Astrocyte of the cerebellum (primary cell): ENCODE measurements at regions of chr1 and their contacts with region 1.

Region 1: GRCh38 chr1:182071924-182072323 is 10.4 kb upstream of the ZNF648 start:
- DNase-seq: no peak
- H3K4me3 ChIP-seq: no peak overlapping the region
- CTCF ChIP-seq: no peak

Region 2: DNA sequence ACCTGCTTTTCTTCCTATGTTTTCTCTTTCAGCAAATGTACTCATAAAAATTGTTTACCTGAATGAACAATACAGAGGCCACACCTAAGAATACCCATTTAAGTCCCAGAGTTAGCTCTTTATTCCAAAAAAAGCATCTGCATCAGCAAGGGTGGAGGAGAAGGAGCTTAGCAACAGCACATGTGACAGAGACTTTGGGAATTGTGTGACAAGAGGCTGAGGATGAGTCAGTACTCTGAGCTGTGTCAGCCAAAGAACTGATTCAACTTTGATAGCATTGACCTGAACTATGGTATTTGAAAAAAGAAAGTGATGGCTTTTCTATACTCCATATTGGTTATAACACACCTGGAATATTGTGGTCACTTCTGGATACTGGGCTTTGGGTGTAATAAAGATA is 173.2 kb before region 1 on chr1:
- in situ Hi-C with region 1: no loop called
- DNase-seq: no peak
- H3K4me3 ChIP-seq: no peak overlapping the region
- CTCF ChIP-seq: no peak

Region 3: DNA sequence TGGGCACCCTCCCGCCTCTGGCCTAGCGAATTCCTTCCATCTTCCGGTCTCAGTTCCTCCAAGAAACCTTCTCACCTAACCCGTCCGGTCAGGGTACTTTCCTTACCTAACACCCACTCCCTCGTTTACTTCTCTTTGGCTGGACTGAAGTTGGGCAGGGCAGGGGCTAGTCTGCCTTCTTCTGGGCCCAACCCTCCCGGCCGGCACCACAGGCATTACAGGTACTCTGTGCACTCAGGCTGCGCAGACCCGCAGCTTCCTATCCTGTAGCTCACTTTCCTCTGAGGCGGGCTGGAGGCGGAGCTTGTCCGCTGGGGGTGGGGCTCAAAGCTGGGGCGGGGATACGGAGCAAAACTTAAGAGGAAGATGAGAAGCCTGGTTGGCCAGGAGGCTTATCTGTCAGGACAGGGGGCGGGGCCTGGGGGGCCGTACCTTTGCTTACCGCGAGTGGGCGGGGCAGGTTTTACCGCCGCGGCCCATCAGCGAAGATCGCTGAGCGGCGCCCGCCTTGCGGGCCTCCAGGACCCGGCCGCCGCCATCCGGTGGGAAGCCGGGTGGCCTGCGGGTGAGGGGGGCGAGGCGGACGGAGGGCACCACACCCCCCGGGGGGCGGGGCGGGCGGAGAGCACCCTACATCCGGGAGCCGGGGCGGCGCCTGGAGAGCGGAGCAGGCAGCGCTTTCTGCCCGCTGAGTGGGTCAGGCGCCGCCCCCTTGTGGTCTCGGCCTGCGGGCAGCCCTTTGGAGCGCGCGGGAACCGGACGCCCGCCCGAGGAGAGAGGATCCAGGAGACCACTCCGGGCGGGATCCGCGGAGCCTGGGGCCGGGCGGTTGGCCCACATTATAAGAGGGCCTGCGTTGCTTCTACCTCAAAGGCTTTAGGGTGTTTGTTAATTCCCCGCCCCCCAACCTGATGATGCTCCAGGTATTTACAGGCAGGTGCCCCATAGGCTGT is 42.3 kb before region 1 on chr1:
- in situ Hi-C with region 1: loop called (anchors 5 kb)
- DNase-seq: peak; percentile 84
- H3K4me3 ChIP-seq: peak overlapping the region; percentile 52
- CTCF ChIP-seq: peak; percentile 23